ENCODE measurements at regions of chr6 and their contacts with region 1.

Region 1: DNA sequence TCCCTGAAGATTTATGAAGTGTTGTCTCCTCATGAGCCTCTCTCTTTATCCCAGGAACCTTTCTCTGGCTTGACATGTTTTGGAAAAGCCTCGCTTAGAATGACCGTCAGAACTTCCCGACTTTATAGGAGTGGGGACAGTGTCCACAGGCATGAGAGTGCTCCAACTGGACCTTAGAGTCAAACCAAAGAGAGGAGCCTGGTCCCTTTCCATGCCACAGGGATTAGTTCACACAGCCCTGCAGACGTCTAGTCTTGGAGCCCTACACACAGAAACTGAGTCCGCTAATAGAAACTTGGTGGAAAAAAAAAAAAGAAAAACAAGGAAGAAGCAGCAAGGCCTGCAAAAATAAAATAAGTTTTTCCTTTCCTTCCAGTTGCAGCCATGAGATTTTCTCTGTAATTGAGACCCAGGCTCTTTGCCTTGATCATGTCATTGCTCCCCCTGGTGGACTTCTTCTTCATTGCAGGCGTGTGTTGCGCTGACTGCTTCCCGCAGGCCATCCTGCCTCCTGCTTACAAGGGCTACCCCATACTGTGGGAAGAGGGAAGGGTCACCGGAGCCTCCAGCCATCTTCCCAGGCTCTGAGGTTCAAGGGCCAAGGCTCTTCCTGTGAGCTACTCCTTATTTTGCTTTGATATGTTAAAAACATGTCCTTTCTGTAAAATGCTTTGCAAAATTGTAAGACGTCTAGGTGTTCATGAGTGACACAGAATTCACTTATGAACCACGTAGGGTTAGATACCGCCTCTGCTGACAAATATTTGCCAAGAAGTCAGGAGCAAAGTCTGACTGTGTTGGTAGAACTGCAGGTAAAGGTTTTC is 201.0 kb downstream of the UST start:
- DNase-seq: peak; percentile 86
- H3K4me3 ChIP-seq: no peak overlapping the region
- H3K27ac ChIP-seq: no peak overlapping the region
- H3K4me1 ChIP-seq: peaks cover 0 to 14% (median 6%) of the 10 kb centered on the region in 6 donors
- H3K27me3 ChIP-seq: no peaks in the 10 kb centered on the region
- CTCF ChIP-seq: peak; percentile 80 to 98 (median 92)
- POLR2A ChIP-seq: no peak

Region 2: GRCh38 chr6:148578245-148578732 is 369.5 kb before region 1 on chr6:
- intact Hi-C with region 1: loop called (anchors 5 kb)
- DNase-seq: peak; percentile 92
- H3K4me3 ChIP-seq: no peak overlapping the region
- H3K27ac ChIP-seq: no peak overlapping the region
- H3K4me1 ChIP-seq: peaks cover 0 to 35% (median 13%) of the 10 kb centered on the region in 6 donors
- H3K27me3 ChIP-seq: no peaks in the 10 kb centered on the region
- CTCF ChIP-seq: peak; percentile 54 to 86 (median 72)
- POLR2A ChIP-seq: no peak

Region 3: GRCh38 chr6:148746363-148747144 is 201.3 kb before region 1 on chr6 and contains the start of gene UST:
- intact Hi-C with region 1: loop called (anchors 5 kb)
- DNase-seq: peak; percentile 90
- H3K4me3 ChIP-seq: peak within 1 kb of the TSS; percentile 72 to 93 (median 82)
- H3K27ac ChIP-seq: peak within 1 kb of the TSS; percentile 84 to 93 (median 88)
- H3K4me1 ChIP-seq: peaks cover 11 to 55% (median 34%) of the 10 kb centered on the region in 6 donors
- H3K27me3 ChIP-seq: peaks cover 0 to 29% (median 0%) of the 10 kb centered on the region in 7 donors
- CTCF ChIP-seq: peak; percentile 18 to 69 (median 48)
- POLR2A ChIP-seq: no peak
- total RNA-seq, gene UST: 12.9 to 26.8 (median 16.1) TPM

Region 4: GRCh38 chr6:148811459-148811858 is 136.4 kb before region 1 on chr6:
- intact Hi-C with region 1: no loop called
- DNase-seq: no peak
- H3K4me3 ChIP-seq: no peak overlapping the region
- H3K27ac ChIP-seq: no peak overlapping the region
- H3K4me1 ChIP-seq: peaks cover 0 to 3% (median 0%) of the 10 kb centered on the region in 6 donors
- H3K27me3 ChIP-seq: no peaks in the 10 kb centered on the region
- CTCF ChIP-seq: no peak
- POLR2A ChIP-seq: no peak

Region 5: GRCh38 chr6:149032599-149033405 is 85.0 kb after region 1 on chr6:
- intact Hi-C with region 1: no loop called
- DNase-seq: no peak
- H3K4me3 ChIP-seq: peak overlapping the region in 1 of 8 donors; percentile 38
- H3K27ac ChIP-seq: peak overlapping the region in 4 of 8 donors; percentile 34 to 68 (median 58)
- H3K4me1 ChIP-seq: peaks cover 0 to 36% (median 23%) of the 10 kb centered on the region in 6 donors
- H3K27me3 ChIP-seq: no peaks in the 10 kb centered on the region
- CTCF ChIP-seq: no peak
- POLR2A ChIP-seq: no peak